Caco-2 (cell line): ENCODE measurements at regions of chr4 and their contacts with region 1.

Region 1: GRCh38 chr4:11428899-11429698 is 405 bp upstream of the HS3ST1 start:
- DNase-seq: peak; percentile 87 to 91
- H3K4me3 ChIP-seq: peak overlapping the region; percentile 71
- H3K4me3 Mint-ChIP-seq: peak overlapping the region; percentile 90
- H3K27ac Mint-ChIP-seq: peak overlapping the region; percentile 91
- H3K4me1 ChIP-seq: no peaks in the 10 kb centered on the region
- H3K4me1 Mint-ChIP-seq: no peaks in the 10 kb centered on the region
- H3K27me3 ChIP-seq: no peaks in the 10 kb centered on the region
- H3K27me3 Mint-ChIP-seq: no peaks in the 10 kb centered on the region
- CTCF ChIP-seq: peak; percentile 67 to 81

Region 2: DNA sequence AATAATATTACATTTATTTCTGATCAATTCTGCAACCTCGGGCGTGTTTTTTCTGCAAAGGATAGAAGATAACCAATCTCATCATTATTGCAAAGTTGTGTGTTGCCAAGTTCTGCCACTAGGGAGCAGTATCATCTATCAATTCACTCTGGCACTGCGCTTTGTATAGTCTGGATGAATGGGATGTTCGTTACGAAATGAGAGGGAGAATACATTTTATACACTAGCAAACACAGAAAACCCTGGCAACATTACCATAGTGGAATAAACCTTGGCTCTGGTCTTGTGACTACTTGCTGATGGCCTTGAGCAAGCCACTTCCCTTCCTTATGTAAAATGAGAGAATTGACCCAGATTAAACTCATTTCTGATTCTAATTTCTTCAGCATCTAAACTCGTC is 874.4 kb before region 1 on chr4:
- CTCF ChIA-PET with region 1: interaction called, 11 read pairs
- POLR2A ChIA-PET with region 1: no interaction called
- intact Hi-C with region 1: loop called (anchors 10 kb)
- DNase-seq: peak; percentile 43 to 70
- H3K4me3 ChIP-seq: no peak overlapping the region
- H3K4me3 Mint-ChIP-seq: no peak overlapping the region
- H3K27ac Mint-ChIP-seq: no peak overlapping the region
- H3K4me1 ChIP-seq: no peaks in the 10 kb centered on the region
- H3K4me1 Mint-ChIP-seq: no peaks in the 10 kb centered on the region
- H3K27me3 ChIP-seq: no peaks in the 10 kb centered on the region
- H3K27me3 Mint-ChIP-seq: peaks cover 3% of the 10 kb centered on the region
- CTCF ChIP-seq: peak; percentile 70 to 75

Region 3: DNA sequence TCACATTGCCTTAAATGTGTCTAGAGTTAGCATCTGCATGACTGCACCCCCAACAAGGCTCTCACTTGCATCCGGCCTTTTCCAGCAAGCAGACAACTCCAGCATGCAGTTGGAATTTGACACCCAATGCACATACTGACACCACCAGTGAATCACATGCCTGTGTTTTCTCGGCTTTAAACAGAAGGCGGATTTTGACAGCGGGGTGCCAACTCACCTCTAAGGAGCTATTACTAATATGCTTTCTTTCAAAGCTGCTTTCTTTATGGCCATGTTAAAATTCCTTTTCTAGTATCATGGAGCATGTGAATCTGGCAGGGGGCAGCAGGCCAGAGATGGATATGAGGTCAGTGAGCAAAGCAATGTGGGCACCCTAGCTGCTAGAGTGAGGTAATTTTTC is 666.5 kb before region 1 on chr4:
- CTCF ChIA-PET with region 1: no interaction called
- POLR2A ChIA-PET with region 1: no interaction called
- intact Hi-C with region 1: loop called (anchors 10 kb)
- DNase-seq: no peak
- H3K4me3 ChIP-seq: no peak overlapping the region
- H3K4me3 Mint-ChIP-seq: no peak overlapping the region
- H3K27ac Mint-ChIP-seq: no peak overlapping the region
- H3K4me1 ChIP-seq: no peaks in the 10 kb centered on the region
- H3K4me1 Mint-ChIP-seq: no peaks in the 10 kb centered on the region
- H3K27me3 ChIP-seq: no peaks in the 10 kb centered on the region
- H3K27me3 Mint-ChIP-seq: no peaks in the 10 kb centered on the region
- CTCF ChIP-seq: no peak

Region 4: GRCh38 chr4:11069083-11069482 is 360.0 kb before region 1 on chr4:
- CTCF ChIA-PET with region 1: no interaction called
- POLR2A ChIA-PET with region 1: no interaction called
- intact Hi-C with region 1: loop called (anchors 5 kb)
- DNase-seq: no peak
- H3K4me3 ChIP-seq: no peak overlapping the region
- H3K4me3 Mint-ChIP-seq: no peak overlapping the region
- H3K27ac Mint-ChIP-seq: no peak overlapping the region
- H3K4me1 ChIP-seq: peaks cover 12% of the 10 kb centered on the region
- H3K4me1 Mint-ChIP-seq: peaks cover 12% of the 10 kb centered on the region
- H3K27me3 ChIP-seq: no peaks in the 10 kb centered on the region
- H3K27me3 Mint-ChIP-seq: no peaks in the 10 kb centered on the region
- CTCF ChIP-seq: no peak

Region 5: GRCh38 chr4:11149612-11150259 is 279.4 kb before region 1 on chr4:
- CTCF ChIA-PET with region 1: no interaction called
- POLR2A ChIA-PET with region 1: no interaction called
- intact Hi-C with region 1: loop called (anchors 5 kb)
- DNase-seq: no peak
- H3K4me3 ChIP-seq: no peak overlapping the region
- H3K4me3 Mint-ChIP-seq: no peak overlapping the region
- H3K27ac Mint-ChIP-seq: no peak overlapping the region
- H3K4me1 ChIP-seq: peaks cover 24% of the 10 kb centered on the region
- H3K4me1 Mint-ChIP-seq: peaks cover 13% of the 10 kb centered on the region
- H3K27me3 ChIP-seq: no peaks in the 10 kb centered on the region
- H3K27me3 Mint-ChIP-seq: no peaks in the 10 kb centered on the region
- CTCF ChIP-seq: no peak

Region 6: DNA sequence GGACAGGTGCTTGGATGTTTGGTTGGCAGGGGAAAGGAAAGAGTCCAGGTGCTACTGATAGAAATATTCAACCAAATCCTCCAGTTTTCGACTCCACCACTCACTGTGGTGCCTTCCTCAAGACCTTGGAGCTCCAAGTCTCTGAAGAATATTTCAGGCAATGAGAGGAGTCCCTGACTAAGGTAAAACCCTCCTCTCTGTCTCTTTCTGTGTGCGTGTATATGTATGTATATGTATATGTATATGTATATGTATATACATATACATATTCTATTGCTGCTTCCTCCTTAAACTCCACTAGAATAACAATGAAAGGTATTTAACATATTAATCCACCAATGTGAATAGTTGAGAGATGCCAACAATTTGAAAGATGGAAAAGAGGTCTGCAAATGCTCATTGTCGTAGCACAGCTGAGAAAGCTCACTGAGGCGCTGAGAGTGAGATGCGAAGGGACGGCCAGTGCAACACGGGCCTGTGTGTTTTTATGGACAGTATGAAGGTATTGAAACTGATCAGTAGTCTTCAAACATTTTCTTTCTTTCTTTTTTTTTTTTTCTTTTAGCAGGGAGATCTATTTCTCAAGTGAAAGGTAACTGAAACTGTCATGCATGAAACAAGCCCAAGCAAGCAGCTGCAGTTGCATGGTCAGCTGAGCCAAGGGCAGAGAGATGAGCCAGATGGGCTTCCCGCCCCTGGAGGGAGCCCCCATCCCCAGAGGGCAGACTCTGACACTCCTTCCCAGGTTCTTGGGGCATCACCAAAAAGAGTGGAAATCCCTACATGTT is 40.7 kb after region 1 on chr4:
- CTCF ChIA-PET with region 1: no interaction called
- POLR2A ChIA-PET with region 1: no interaction called
- intact Hi-C with region 1: loop called (anchors 2 kb)
- DNase-seq: no peak
- H3K4me3 ChIP-seq: no peak overlapping the region
- H3K4me3 Mint-ChIP-seq: no peak overlapping the region
- H3K27ac Mint-ChIP-seq: no peak overlapping the region
- H3K4me1 ChIP-seq: 0 out of 2 replicates have a peak, but pooled peaks cover 6% of the 10 kb centered on the region
- H3K4me1 Mint-ChIP-seq: peaks cover 5% of the 10 kb centered on the region
- H3K27me3 ChIP-seq: no peaks in the 10 kb centered on the region
- H3K27me3 Mint-ChIP-seq: no peaks in the 10 kb centered on the region
- CTCF ChIP-seq: no peak

Region 7: GRCh38 chr4:11525085-11525484 is 96.0 kb after region 1 on chr4:
- CTCF ChIA-PET with region 1: no interaction called
- POLR2A ChIA-PET with region 1: no interaction called
- intact Hi-C with region 1: no loop called
- DNase-seq: no peak
- H3K4me3 ChIP-seq: no peak overlapping the region
- H3K4me3 Mint-ChIP-seq: no peak overlapping the region
- H3K27ac Mint-ChIP-seq: no peak overlapping the region
- H3K4me1 ChIP-seq: no peaks in the 10 kb centered on the region
- H3K4me1 Mint-ChIP-seq: no peaks in the 10 kb centered on the region
- H3K27me3 ChIP-seq: no peaks in the 10 kb centered on the region
- H3K27me3 Mint-ChIP-seq: peaks cover 12% of the 10 kb centered on the region
- CTCF ChIP-seq: no peak

Region 8: DNA sequence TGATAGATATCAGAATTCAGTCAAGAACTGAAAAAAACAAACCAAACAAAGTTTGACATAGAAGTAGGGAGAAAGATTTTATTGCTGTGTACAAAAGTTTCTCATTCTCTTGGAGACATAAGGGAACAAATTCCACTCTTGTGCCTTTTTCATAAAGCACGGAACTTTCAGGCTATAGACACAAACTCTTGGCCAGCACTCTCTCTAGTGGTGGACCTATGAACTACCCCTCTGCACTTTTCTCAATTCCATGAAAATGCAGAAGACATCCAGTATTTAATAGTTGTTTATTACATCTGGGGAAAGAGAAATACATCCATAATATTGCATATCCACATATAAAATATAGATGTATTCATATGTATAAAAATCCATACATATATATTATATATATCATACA is 291.2 kb after region 1 on chr4:
- CTCF ChIA-PET with region 1: no interaction called
- POLR2A ChIA-PET with region 1: no interaction called
- intact Hi-C with region 1: loop called (anchors 2 kb)
- DNase-seq: peak in 1 of 2 experiments; percentile 13
- H3K4me3 ChIP-seq: no peak overlapping the region
- H3K4me3 Mint-ChIP-seq: no peak overlapping the region
- H3K27ac Mint-ChIP-seq: no peak overlapping the region
- H3K4me1 ChIP-seq: no peaks in the 10 kb centered on the region
- H3K4me1 Mint-ChIP-seq: no peaks in the 10 kb centered on the region
- H3K27me3 ChIP-seq: no peaks in the 10 kb centered on the region
- H3K27me3 Mint-ChIP-seq: no peaks in the 10 kb centered on the region
- CTCF ChIP-seq: peak; percentile 61 to 75